Left cardiac atrium (tissue), 4 donors: ENCODE measurements at regions of chr18 and their contacts with region 1.

Region 1: DNA sequence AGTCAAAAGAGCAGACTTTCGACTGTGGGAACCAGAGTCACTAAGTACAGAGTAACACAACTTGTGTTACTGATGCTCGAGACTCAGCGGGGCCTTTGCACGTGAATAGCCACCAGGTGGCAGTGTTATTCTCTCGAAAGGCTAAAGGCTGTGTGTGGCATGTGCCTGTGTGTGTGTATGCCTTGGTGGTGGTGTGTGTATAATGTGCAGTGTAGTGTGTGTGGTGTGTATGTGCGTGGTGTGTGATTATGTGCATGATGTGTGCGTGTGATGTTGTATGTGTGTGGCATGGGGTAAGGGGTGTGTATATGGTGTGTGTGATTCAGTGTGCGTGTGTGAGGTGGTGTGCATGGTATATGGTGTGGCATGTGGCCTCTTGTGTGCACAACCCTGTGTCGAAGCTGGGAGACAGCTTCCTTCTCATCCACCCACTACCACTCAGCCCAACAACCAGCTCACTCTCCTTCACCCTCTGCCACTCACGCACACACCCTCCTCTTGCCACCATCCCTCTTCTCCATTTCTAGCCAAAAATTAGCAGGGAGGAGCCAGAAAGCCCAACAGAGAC is 83.0 kb upstream of the ZNF532 start:
- DNase-seq: peak; percentile 77
- ATAC-seq: peak; percentile 85 to 88

Region 2: DNA sequence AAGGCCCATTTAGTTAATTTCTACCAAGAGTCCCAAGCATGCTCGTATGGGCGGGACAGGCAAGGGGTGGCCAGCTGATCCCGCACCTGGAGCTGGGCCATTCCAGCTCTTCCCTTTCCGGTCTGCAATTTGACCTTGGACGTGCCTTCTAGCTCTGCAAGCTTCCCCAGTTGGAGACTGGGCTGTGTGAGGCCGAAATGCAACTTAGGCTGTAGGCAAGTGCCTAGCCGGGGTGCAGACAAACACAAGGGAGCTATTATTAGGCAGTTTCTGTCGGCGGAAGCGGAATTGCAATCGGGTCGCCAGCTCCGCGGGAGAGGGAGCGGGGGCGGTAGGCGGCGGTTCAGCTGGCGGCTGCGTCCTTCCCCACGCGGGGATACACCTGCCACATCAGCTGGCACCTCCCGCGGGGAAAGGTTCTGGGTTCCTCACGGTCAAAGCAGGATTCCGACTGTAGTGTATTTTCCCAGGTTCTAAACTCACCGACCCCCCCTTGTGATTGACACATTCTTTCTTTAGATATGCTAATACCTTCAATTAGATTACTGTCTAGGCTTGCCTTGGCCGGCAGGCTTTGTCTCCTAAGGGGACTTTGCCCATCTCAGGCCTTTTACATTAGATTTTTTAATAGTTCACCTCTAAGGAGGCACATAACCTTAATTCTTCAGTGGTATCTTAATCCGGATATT is 65.8 kb after region 1 on chr18:
- intact Hi-C with region 1: loop called in 1 of 2 experiments (anchors 5 kb)
- DNase-seq: peak; percentile 46
- ATAC-seq: peak; percentile 57 to 71

Region 3: DNA sequence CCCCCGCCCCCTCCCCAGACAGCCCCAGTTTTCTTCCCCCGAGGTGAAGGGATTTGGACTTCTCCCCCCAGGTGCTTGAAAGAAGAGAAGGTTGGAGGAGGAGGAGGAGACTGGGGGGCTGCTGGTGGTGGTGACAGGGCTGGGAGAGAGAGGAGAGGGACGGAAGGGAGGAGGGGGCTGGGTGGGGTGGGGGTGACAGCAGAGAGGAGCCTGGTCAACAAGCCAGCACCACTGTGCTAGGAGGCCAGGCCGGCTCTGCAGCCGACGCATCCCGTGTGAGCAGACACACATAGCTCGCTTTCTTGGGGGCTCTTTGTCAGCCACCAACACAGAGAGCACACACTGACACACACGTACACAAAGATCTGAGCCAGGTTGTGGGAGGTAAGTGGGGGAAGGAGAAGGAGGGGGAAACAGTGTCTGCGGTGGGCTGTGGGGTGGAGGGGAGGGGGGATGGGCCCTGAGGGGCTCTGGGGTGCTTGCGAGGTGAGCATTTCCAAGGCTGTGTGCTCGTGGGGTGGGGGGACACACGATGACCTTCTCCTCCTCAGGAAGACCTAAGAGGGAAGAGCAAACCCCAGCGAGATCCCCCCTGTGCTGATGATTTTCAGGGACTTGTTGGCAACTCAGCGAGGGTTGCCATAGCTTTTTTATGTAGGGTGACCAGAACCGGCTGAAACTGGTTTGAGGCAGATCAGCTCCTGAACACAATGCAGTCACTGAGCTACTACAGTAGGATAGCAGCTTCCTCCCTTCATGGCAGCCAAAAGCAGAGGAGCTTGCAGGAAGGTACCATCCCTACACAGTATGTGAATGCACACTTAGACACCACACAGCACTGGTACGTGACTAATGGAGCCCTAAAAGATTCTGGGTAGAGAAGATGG is 82.7 kb after region 1 on chr18 and contains the start of gene ZNF532:
- intact Hi-C with region 1: loop called in 1 of 2 experiments (anchors 5 kb)
- DNase-seq: peak; percentile 36
- ATAC-seq: peak; percentile 39 to 53
- total RNA-seq, gene ZNF532: 56.8 to 57.9 TPM

Region 4: GRCh38 chr18:58998401-58999203 is 216.9 kb after region 1 on chr18:
- intact Hi-C with region 1: loop called in 1 of 2 experiments (anchors 10 kb)
- DNase-seq: peak; percentile 79
- ATAC-seq: peak; percentile 79 to 83

Region 5: DNA sequence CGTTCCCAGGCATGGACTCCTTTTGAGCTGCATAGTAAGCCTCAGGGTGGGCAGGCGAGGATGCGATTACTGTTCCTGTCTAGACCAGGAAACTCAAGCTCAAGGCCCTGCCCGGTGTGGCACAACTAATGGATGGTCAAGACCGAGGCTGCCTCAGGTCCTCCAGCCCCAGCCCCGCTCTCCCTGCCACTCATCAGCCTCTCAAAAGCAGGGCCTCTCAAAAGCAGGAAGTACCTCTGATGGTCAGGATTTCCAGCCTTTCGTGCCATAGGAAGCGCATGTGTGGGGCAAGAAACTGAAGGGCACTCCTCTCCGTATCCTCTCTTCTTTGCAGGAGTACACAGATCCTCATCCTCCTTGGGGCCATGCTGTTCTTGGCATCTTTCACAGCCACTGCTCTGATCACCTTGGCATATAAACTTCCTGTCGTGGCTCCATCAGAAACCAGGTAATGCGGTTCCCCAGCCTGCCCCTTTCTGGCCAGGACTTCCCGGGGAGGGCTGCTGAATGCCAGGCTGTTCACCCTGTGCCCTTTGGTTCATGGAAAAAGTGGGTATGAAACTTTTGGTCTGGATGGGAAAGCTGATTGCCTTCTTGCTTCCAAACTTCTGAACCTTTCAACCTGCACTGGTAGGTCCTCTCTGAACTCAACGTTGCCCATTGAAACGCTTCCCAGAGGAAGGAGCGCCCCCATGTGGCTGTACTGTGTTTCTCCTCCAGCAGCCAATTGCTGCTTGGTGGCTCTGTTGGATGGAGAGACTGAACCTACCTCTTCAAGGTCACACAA is 275.2 kb after region 1 on chr18:
- intact Hi-C with region 1: loop called in 1 of 2 experiments (anchors 1 kb)
- DNase-seq: peak; percentile 77
- ATAC-seq: peak; percentile 56 to 73

Region 6: GRCh38 chr18:59070181-59070912 is 288.6 kb after region 1 on chr18:
- intact Hi-C with region 1: loop called (anchors 1 to 2 kb)
- DNase-seq: peak; percentile 90
- ATAC-seq: peak; percentile 89 to 90